Panc1 (cell line): ENCODE measurements at regions of chr17 and their contacts with region 1.

Region 1: DNA sequence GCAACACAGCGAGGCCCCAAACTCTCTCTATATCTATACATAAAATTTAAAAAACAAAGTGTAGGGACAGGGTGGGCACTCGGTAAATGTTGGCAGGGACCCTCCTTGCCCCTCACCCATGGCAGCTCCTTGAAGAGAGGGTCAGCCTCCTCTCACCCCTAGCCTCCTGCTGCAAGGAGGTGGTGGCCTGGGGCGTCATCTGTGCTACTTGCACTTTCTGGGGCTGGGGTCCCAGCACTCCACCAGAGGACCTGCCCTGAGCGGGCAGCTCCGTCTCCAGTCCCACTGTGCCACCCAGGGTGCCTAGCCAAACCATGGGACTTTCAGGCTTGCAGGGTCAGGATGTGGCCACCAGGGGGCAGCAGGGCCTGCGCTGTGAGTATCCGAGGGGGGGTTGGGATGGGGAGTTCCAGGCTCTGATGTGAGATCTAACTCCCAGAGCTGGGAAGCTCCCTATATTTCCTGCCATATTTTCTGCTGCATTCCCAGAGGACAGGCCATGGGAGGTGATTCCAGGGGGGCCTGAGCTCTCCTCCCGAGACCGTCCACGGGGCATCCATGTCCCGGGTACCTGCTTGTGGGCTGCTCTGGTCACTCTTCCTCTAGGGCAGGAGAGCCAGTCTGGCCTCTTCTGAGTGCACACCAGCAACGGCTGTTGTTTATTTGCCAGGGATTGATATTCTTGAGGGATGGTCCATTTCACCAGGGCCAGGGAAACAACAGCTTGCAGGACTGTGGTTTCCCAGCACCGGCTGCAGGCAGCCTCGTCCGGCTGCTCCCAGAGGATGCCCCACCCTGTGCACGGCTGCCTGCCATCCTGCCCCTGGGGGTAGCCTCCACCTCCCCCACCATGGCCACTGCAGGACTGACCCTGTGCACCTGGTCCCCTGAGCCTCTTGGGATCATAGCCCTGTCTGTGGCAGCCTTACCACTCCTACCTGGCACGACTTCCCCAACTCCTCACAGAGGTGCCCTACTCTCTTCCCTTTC is 1.1 kb downstream of the GPR142 start:
- DNase-seq: no peak
- ATAC-seq: peak; percentile 88
- H3K4me3 ChIP-seq: no peak overlapping the region
- H3K27ac ChIP-seq: no peak overlapping the region
- H3K4me1 ChIP-seq: no peaks in the 10 kb centered on the region
- H3K27me3 ChIP-seq: no peaks in the 10 kb centered on the region
- CTCF ChIP-seq: peak; percentile 98

Region 2: DNA sequence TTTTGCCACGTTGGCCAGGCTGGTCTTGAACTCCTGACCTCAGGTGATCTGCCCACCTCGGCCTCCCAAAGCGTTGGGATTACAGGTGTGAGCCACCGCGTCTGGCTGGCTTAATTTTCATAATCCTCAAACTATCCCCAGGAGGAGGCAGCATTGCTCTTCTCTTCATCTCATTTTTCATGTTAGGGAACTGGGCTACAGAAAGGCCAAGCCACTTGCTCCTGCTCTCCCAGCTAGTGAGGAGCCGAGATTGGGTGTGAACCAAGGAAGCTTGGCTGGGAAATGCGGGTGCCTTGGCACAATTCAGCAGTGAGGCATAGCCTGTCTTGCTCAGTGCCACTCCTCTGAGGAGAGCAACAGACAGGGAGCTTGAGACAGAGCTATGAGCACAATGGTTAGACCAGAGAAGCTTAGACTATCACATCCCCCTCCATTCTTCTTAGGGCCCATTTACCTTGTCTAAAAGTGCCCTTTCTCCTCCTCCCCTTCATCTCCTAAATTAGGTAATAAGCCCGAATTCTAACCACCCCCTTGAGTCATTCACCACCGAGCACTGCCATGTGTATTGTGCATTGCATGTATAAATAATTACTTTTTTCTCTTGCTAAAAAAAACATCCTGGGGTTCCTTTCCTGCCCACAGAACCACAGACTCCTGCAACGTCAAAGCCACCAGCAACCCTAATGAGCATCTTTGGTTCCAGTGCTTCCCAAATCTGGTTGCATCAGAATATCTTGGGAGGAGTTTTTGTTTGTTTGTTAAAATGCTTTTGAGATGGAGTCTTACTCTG is 62.3 kb before region 1 on chr17:
- CTCF ChIA-PET with region 1: interaction called, 17 read pairs
- POLR2A ChIA-PET with region 1: no interaction called
- in situ Hi-C with region 1: no loop called
- intact Hi-C with region 1: no loop called
- DNase-seq: no peak
- ATAC-seq: peak; percentile 56
- H3K4me3 ChIP-seq: no peak overlapping the region
- H3K27ac ChIP-seq: no peak overlapping the region
- H3K4me1 ChIP-seq: no peaks in the 10 kb centered on the region
- H3K27me3 ChIP-seq: no peaks in the 10 kb centered on the region
- CTCF ChIP-seq: no peak

Region 3: GRCh38 chr17:74379495-74380085 is 11.2 kb after region 1 on chr17:
- CTCF ChIA-PET with region 1: interaction called, 20 read pairs
- POLR2A ChIA-PET with region 1: no interaction called
- in situ Hi-C with region 1: no loop called
- intact Hi-C with region 1: no loop called
- DNase-seq: no peak
- ATAC-seq: peak; percentile 92
- H3K4me3 ChIP-seq: peak overlapping the region in 1 of 2 experiments; percentile 16; a peak in 1 of 4 replicates
- H3K27ac ChIP-seq: no peak overlapping the region; the same call in 1 of the 2 replicates
- H3K4me1 ChIP-seq: peaks cover 10% of the 10 kb centered on the region
- H3K27me3 ChIP-seq: peaks cover 3% of the 10 kb centered on the region
- CTCF ChIP-seq: peak; percentile 97

Region 4: DNA sequence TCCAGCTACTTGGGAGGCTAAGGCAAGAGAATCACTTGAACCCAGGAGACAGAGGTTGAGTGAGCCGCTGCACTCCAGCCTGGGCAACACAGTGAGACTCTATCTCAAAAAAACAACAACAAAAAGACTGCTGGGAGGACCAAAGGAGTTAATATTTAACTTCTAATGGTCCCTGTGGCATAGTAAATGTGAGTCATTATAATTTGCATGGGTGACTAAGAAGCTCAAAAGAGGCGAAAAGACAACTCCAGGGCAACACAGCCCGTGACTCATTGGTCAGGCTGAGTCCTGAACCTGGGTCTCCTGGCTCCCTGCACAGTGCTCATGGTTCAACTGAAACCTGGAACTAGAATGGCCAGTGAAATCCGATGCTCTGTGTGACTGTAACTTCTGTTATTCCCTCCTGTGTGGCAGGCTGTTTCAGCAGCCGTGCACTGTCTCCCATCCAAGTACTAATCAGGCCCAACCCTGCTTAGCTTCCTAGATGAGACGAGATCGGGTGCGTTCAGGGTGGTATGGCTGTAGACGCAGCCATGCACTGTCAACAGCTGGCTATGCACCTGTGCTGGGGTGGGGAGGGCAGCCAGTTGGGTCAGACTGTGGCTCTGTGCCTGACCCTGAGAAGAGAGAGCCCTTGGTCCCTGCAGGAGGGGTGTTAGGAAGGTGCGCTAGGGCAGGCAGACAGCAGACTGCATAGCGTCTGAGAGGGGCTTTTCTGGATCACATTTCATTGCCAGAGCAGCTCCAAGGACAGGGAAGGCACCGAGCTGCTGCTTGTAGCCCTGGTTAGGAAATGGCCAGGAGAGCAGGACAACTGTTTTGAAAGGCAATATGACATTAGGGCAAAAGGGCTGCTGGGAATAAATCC is 49.0 kb after region 1 on chr17:
- CTCF ChIA-PET with region 1: no interaction called
- POLR2A ChIA-PET with region 1: no interaction called
- in situ Hi-C with region 1: no loop called
- intact Hi-C with region 1: no loop called
- DNase-seq: no peak
- ATAC-seq: peak; percentile 81
- H3K4me3 ChIP-seq: no peak overlapping the region
- H3K27ac ChIP-seq: no peak overlapping the region
- H3K4me1 ChIP-seq: no peaks in the 10 kb centered on the region
- H3K27me3 ChIP-seq: no peaks in the 10 kb centered on the region
- CTCF ChIP-seq: no peak

Region 5: GRCh38 chr17:74493381-74493833 is 125.0 kb after region 1 on chr17:
- CTCF ChIA-PET with region 1: interaction called, 4 read pairs
- POLR2A ChIA-PET with region 1: no interaction called
- in situ Hi-C with region 1: no loop called
- intact Hi-C with region 1: loop called (anchors 1 kb)
- DNase-seq: peak; percentile 60
- ATAC-seq: peak; percentile 96
- H3K4me3 ChIP-seq: no peak overlapping the region
- H3K27ac ChIP-seq: no peak overlapping the region
- H3K4me1 ChIP-seq: no peaks in the 10 kb centered on the region
- H3K27me3 ChIP-seq: no peaks in the 10 kb centered on the region
- CTCF ChIP-seq: peak; percentile 93

Region 6: DNA sequence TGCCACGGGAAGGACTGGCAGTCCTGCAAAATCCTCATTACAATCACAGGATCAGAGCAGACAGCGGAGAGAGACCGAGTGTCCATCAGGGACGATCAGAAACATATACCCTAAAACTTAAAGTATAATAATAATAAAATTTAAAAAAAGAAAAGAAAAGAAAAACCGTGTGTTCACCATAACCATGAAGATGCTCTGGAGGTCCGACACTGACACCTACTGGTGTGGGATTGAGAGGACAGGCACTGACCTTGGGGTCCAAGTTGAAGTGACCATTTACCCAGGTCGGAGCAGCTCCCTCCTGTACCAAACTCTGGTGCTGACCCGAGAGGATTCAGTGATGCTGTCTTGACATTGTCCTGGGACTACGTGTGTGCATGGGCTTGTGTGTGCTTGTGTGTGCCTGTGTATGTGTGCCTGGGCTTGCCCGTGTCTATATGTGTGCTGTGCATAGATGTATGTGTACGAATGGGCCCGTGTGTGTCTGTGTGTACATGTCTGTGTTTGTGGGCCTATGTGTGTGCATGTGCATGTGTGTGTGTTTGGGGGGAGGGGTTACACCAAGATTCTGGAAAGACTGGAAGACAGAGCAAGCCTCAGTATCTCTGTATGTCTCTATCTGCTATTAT is 233.7 kb after region 1 on chr17:
- CTCF ChIA-PET with region 1: no interaction called
- POLR2A ChIA-PET with region 1: no interaction called
- in situ Hi-C with region 1: no loop called
- intact Hi-C with region 1: loop called (anchors 5 kb)
- DNase-seq: peak; percentile 33
- ATAC-seq: peak; percentile 80
- H3K4me3 ChIP-seq: no peak overlapping the region
- H3K27ac ChIP-seq: no peak overlapping the region
- H3K4me1 ChIP-seq: 0 out of 2 replicates have a peak, but pooled peaks cover 3% of the 10 kb centered on the region
- H3K27me3 ChIP-seq: no peaks in the 10 kb centered on the region; the same call in 1 of the 2 replicates
- CTCF ChIP-seq: peak; percentile 92